ENCODE measurements at regions of chr1 and their contacts with region 1.

Region 1: GRCh38 chr1:168019407-168019806 is 82.5 kb upstream of the MPC2 start:
- DNase-seq: peak; percentile 6
- ATAC-seq: peak; percentile 39
- H3K4me3 Mint-ChIP-seq: no peak overlapping the region
- H3K27ac Mint-ChIP-seq: no peak overlapping the region
- H3K4me1 Mint-ChIP-seq: no peaks in the 10 kb centered on the region
- H3K27me3 Mint-ChIP-seq: no peaks in the 10 kb centered on the region

Region 2: GRCh38 chr1:168000656-168001055 is 18.8 kb before region 1 on chr1:
- CTCF ChIA-PET with region 1: interaction called, 5 read pairs
- POLR2A ChIA-PET with region 1: no interaction called
- intact Hi-C with region 1: loop called in 1 of 2 experiments (anchors 2 kb)
- DNase-seq: no peak
- ATAC-seq: no peak
- H3K4me3 Mint-ChIP-seq: no peak overlapping the region
- H3K27ac Mint-ChIP-seq: no peak overlapping the region
- H3K4me1 Mint-ChIP-seq: no peaks in the 10 kb centered on the region
- H3K27me3 Mint-ChIP-seq: no peaks in the 10 kb centered on the region